ENCODE measurements at regions of chr7 and their contacts with region 1.

Region 1: GRCh38 chr7:113421696-113422330 is 303.5 kb upstream of the SMIM30 start:
- DNase-seq: peak; percentile 82
- ATAC-seq: peak; percentile 97
- H3K4me3 ChIP-seq: no peak overlapping the region
- H3K27ac ChIP-seq: no peak overlapping the region
- H3K4me1 ChIP-seq: no peaks in the 10 kb centered on the region
- H3K27me3 ChIP-seq: no peaks in the 10 kb centered on the region
- CTCF ChIP-seq: peak; percentile 97
- POLR2A ChIP-seq: no peak; the same call in 1 of the 2 replicates
- RAD21 ChIP-seq: peak; percentile 93

Region 2: DNA sequence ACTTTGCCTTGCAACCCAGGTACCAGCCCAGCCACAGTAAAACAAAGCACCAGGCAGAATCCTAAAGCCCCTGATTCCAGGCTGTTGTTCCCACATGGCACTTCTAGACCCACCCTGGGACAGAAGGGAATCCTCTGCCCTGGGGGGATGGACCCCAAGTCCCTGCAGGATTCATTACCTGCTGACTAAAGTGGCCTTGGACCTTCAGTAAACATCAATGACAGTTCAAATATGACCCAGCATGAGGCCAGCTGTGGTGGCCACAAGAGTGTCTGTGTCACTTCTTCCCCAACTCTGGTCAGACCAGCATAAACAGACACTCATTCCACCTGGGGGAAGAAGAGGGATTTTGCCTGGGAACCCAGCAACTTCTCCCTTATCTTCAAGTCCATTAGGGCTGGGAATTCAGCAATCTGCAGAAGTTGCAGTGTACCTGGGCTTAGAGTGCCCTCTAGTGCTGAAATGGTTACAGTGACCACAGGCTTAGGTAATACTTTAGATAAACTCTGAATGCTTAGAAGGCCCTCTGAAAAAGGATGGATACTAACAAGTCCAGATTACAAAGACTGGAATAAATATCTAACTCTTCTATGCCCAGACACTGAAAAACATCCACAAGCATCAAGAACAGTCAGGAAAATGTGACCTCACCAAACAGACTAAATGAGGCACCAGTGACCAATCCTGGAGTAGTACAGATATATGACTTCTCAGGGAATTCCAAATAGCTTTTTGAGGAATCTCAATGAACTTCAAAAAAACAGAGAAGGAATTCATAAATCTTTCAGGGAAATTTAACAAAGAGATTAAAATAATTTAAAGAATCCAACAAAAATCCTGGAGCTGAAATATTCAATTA is 523.2 kb before region 1 on chr7:
- CTCF ChIA-PET with region 1: no interaction called
- POLR2A ChIA-PET with region 1: interaction called, 4 read pairs
- dilution Hi-C with region 1: no loop called
- in situ Hi-C with region 1: no loop called
- intact Hi-C with region 1: loop called (anchors 5 kb)
- DNase-seq: peak; percentile 76
- ATAC-seq: peak; percentile 96
- H3K4me3 ChIP-seq: no peak overlapping the region
- H3K27ac ChIP-seq: no peak overlapping the region
- H3K4me1 ChIP-seq: no peaks in the 10 kb centered on the region
- H3K27me3 ChIP-seq: no peaks in the 10 kb centered on the region
- CTCF ChIP-seq: peak; percentile 88
- POLR2A ChIP-seq: no peak
- RAD21 ChIP-seq: peak; percentile 94

Region 3: GRCh38 chr7:113026941-113027340 is 394.9 kb before region 1 on chr7:
- CTCF ChIA-PET with region 1: no interaction called
- POLR2A ChIA-PET with region 1: no interaction called
- dilution Hi-C with region 1: no loop called
- in situ Hi-C with region 1: loop called (anchors 10 kb)
- intact Hi-C with region 1: no loop called
- DNase-seq: peak; percentile 45
- ATAC-seq: peak; percentile 74
- H3K4me3 ChIP-seq: no peak overlapping the region
- H3K27ac ChIP-seq: no peak overlapping the region
- H3K4me1 ChIP-seq: no peaks in the 10 kb centered on the region
- H3K27me3 ChIP-seq: no peaks in the 10 kb centered on the region
- CTCF ChIP-seq: no peak
- POLR2A ChIP-seq: no peak
- RAD21 ChIP-seq: no peak

Region 4: DNA sequence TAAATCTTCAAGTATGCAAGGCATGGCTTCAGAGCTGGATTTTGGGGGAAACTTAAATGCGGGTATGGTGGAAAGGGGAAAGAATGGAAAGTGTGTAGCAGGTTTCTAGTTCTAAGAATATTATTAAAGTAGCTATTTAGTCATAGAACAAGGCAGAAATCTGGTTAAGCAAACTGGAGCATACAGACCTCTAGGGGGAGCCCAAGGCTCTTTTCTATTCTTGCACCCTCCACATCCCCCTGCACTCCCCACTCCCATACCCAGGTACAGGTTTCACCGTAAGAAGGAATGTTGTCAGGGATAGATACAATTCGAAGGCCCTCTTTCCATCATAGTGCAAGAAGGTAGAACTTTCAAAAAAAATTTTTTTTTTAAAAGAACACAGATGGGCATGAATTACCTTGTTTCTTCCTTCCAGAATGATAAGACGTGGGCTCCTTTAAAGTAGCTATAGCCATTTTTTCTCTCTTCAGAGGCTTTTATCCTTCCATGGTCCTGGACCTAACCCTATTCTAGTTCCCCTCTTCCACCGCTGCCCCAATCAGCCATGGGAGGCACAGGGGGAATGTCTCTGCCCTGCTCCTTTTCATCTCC is 262.0 kb before region 1 on chr7:
- CTCF ChIA-PET with region 1: interaction called, 13 read pairs
- POLR2A ChIA-PET with region 1: no interaction called
- dilution Hi-C with region 1: no loop called
- in situ Hi-C with region 1: loop called (anchors 5 kb)
- intact Hi-C with region 1: loop called (anchors 1 kb)
- DNase-seq: peak; percentile 45
- ATAC-seq: peak; percentile 75
- H3K4me3 ChIP-seq: no peak overlapping the region
- H3K27ac ChIP-seq: no peak overlapping the region
- H3K4me1 ChIP-seq: no peaks in the 10 kb centered on the region
- H3K27me3 ChIP-seq: no peaks in the 10 kb centered on the region
- CTCF ChIP-seq: peak; percentile 74
- POLR2A ChIP-seq: no peak
- RAD21 ChIP-seq: peak; percentile 71

Region 5: GRCh38 chr7:113371416-113372043 is 50.3 kb before region 1 on chr7:
- CTCF ChIA-PET with region 1: no interaction called
- POLR2A ChIA-PET with region 1: no interaction called
- dilution Hi-C with region 1: no loop called
- in situ Hi-C with region 1: no loop called
- intact Hi-C with region 1: no loop called
- DNase-seq: peak; percentile 2
- ATAC-seq: peak; percentile 85
- H3K4me3 ChIP-seq: no peak overlapping the region
- H3K27ac ChIP-seq: no peak overlapping the region
- H3K4me1 ChIP-seq: peaks cover 2% of the 10 kb centered on the region; the same call in 1 of the 2 replicates
- H3K27me3 ChIP-seq: no peaks in the 10 kb centered on the region
- CTCF ChIP-seq: no peak
- POLR2A ChIP-seq: no peak
- RAD21 ChIP-seq: no peak

Region 6: GRCh38 chr7:113698556-113699220 is 276.9 kb after region 1 on chr7:
- CTCF ChIA-PET with region 1: no interaction called
- POLR2A ChIA-PET with region 1: no interaction called
- dilution Hi-C with region 1: no loop called
- in situ Hi-C with region 1: no loop called
- intact Hi-C with region 1: loop called (anchors 2 kb)
- DNase-seq: peak; percentile 39
- ATAC-seq: peak; percentile 70
- H3K4me3 ChIP-seq: no peak overlapping the region
- H3K27ac ChIP-seq: no peak overlapping the region
- H3K4me1 ChIP-seq: no peaks in the 10 kb centered on the region
- H3K27me3 ChIP-seq: no peaks in the 10 kb centered on the region
- CTCF ChIP-seq: peak; percentile 70
- POLR2A ChIP-seq: no peak
- RAD21 ChIP-seq: peak; percentile 56

Region 7: DNA sequence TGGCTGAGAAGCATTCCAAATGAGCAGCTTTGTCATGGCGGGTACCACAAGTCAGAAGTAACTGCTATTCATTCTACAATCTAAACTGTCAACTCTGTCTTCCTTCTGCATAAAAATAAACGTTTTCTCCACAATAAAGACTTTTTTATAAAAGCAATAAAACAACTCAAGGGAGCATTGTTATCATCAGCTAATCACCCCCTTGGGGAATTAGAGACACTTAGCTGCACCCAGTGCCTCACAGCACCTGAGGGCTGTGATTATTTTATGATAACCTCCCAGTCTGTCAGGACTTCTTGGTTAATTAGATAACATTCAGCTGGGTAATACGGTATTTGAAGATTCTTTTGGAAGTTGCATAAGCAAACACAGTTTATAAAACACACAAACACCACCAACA is 341.4 kb after region 1 on chr7:
- CTCF ChIA-PET with region 1: no interaction called
- POLR2A ChIA-PET with region 1: no interaction called
- dilution Hi-C with region 1: no loop called
- in situ Hi-C with region 1: no loop called
- intact Hi-C with region 1: no loop called
- DNase-seq: no peak
- ATAC-seq: no peak
- H3K4me3 ChIP-seq: no peak overlapping the region
- H3K27ac ChIP-seq: no peak overlapping the region
- H3K4me1 ChIP-seq: no peaks in the 10 kb centered on the region
- H3K27me3 ChIP-seq: no peaks in the 10 kb centered on the region
- CTCF ChIP-seq: no peak
- POLR2A ChIP-seq: no peak
- RAD21 ChIP-seq: no peak

Region 8: GRCh38 chr7:114148779-114149178 is 727.0 kb after region 1 on chr7:
- CTCF ChIA-PET with region 1: no interaction called
- POLR2A ChIA-PET with region 1: no interaction called
- dilution Hi-C with region 1: no loop called
- in situ Hi-C with region 1: no loop called
- intact Hi-C with region 1: no loop called
- DNase-seq: no peak
- ATAC-seq: no peak
- H3K4me3 ChIP-seq: no peak overlapping the region
- H3K27ac ChIP-seq: no peak overlapping the region
- H3K4me1 ChIP-seq: no peaks in the 10 kb centered on the region
- H3K27me3 ChIP-seq: no peaks in the 10 kb centered on the region
- CTCF ChIP-seq: no peak
- POLR2A ChIP-seq: no peak
- RAD21 ChIP-seq: no peak

Region 9: GRCh38 chr7:115352375-115352774 is 1930.6 kb after region 1 on chr7:
- CTCF ChIA-PET with region 1: no interaction called
- POLR2A ChIA-PET with region 1: no interaction called
- dilution Hi-C with region 1: no loop called
- in situ Hi-C with region 1: no loop called
- intact Hi-C with region 1: no loop called
- DNase-seq: peak; percentile 91
- ATAC-seq: peak; percentile 82
- H3K4me3 ChIP-seq: no peak overlapping the region
- H3K27ac ChIP-seq: no peak overlapping the region
- H3K4me1 ChIP-seq: peaks cover 4% of the 10 kb centered on the region; the same call in 1 of the 2 replicates
- H3K27me3 ChIP-seq: no peaks in the 10 kb centered on the region
- CTCF ChIP-seq: no peak; the same call in 1 of the 2 replicates
- POLR2A ChIP-seq: no peak
- RAD21 ChIP-seq: no peak